BJ (cell line): ENCODE measurements at regions of chr14 and their contacts with region 1.

Region 1: DNA sequence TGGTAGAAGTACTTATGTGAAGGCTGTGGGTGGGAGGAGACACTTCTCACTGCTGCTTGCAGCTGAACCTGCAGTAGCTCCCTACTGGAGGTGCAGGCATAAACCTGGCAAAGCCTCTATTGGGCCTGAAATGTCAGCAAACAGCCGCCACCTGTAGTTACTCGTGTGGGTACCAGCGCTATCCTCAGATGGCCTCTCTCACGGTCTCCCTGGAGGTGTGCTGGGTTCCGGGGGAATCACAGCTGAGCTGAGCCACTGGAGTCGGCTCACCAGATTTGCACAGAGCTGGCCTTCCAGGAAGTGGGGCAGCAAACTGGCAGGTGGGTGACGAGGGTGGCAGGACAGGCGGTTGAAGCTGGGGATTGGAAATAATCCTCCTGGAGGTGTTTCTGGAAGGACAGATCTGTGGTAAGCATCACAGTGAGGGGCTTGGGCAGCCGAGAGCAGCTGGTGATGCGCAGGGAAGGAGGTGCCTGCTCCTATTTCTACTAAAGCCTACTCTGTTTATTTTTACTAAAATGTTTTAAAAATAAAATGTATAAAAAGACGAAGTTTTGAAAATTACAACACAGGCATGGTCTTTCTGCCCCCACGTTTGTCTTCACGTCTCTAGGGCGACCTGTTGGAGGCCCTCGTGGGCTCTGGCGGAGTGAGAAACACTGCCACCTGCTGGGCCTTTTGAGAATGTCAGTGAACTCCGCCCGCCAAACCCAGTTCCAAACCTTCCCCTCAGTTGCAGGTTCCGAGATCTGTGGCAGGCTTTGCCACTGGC is 67.8 kb upstream of the PLEKHG3 start:
- DNase-seq: no peak
- H3K4me3 ChIP-seq: no peak overlapping the region
- H3K27me3 ChIP-seq: no peaks in the 10 kb centered on the region
- CTCF ChIP-seq: peak; percentile 81

Region 2: DNA sequence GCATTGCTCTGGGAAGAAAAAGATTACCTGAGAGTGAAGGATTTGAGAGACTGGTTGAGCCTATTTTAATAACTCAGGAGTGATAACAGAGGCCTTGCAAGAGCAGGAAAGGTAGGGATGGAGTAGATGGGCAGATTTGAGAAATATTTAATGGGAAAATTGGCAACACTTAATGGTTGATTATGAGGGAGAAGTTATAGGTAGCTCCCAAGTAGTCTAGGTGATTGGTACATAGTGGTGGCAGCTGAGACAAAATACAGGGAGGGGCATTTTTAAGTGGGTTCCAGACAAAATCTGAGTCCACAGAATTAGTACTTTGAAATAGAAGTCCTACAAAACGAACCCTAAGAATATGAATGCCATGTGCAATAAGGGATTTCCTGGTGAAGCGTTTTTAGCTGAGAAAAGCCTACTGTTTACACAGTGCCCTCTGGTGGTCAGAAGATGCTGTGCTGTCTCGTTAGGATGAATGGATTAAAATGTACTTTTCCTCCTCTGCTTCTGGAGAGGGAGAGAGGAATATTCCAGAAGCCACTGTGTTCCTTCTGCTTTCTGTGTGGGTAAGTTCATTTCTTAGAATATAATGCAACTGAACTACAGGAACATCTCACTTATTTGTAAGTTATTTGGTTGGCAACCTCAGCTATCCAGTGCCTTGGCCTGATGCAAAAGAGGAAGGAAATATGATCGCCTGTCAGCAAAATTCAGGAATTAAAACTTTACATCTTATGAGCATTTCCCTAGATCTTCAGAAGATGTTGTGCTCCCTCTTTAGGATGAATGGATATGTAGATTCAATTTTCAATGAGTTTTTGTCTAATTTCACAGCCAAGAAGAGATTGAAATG is 125.3 kb before region 1 on chr14:
- CTCF ChIA-PET with region 1: interaction called, 23 read pairs
- POLR2A ChIA-PET with region 1: no interaction called
- DNase-seq: no peak
- H3K4me3 ChIP-seq: no peak overlapping the region
- H3K27me3 ChIP-seq: no peaks in the 10 kb centered on the region
- CTCF ChIP-seq: peak; percentile 90

Region 3: DNA sequence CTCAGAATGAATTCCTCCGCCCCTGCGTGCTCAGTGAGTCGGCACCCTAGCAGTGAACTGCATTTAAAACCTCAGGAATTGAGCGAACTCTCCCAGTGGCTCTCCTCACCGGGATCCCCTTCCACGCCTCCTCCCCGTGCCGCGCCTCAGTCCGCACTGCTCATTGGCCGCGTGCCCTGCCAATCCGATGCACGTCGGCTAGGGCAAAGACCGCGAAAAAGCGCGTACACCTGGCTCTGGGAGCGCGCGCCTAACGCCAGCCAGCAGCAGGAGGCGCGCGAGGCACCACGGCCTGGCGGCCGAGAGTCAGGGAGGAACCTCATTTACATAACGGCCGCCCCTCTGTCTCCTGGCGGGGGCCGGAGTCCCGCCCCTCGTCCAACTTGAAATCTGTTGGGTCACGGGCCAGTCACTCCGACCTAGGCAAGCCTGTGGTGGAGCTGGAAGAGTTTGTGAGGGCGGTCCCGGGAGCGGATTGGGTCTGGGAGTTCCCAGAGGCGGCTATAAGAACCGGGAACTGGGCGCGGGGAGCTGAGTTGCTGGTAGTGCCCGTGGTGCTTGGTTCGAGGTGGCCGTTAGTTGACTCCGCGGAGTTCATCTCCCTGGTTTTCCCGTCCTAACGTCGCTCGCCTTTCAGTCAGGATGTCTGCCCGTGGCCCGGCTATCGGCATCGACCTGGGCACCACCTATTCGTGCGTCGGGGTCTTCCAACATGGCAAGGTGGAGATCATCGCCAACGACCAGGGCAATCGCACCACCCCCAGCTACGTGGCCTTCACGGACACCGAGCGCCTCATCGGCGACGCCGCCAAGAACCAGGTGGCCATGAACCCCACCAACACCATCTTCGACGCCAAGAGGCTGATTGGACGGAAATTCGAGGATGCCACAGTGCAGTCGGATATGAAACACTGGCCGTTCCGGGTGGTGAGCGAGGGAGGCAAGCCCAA is 95.9 kb before region 1 on chr14 and contains the start of gene HSPA2:
- CTCF ChIA-PET with region 1: interaction called, 91 read pairs
- POLR2A ChIA-PET with region 1: interaction called, 4 read pairs
- DNase-seq: peak; percentile 96
- H3K4me3 ChIP-seq: peak within 1 kb of the TSS; percentile 55
- H3K27me3 ChIP-seq: no peaks in the 10 kb centered on the region
- CTCF ChIP-seq: peak; percentile 92
- polyA plus RNA-seq, gene HSPA2: 64.1 and 96.1 TPM in 2 replicates

Region 4: DNA sequence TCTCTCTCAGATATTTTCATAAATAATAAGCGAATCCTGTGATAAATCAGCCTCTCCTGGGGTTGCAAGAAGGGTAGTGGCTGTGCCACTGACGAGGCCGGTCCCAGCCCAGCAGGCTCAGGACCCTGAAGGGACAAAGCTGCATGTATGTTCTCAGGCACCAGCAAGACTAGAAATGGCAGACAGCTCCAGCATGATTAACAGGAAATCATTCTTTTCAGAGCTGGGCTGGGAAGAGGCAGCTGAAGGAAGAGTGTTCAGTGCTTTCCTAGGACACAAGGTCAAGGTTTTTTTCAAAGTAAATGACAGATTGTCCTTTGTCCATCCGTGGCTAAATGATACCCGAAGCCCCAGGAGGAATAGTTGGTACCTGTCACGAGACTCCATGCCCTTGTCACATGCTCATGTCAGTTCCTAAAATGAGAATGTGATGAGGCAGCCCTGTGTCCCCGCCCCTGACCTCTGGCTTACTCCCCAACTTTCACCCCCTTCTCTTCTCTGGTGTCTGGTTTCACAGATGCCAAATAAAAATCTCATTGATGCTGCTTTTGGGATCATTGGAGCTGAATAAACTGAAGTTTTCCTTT is 21.5 kb before region 1 on chr14:
- CTCF ChIA-PET with region 1: interaction called, 10 read pairs
- POLR2A ChIA-PET with region 1: no interaction called
- DNase-seq: no peak
- H3K4me3 ChIP-seq: no peak overlapping the region
- H3K27me3 ChIP-seq: no peaks in the 10 kb centered on the region
- CTCF ChIP-seq: no peak

Region 5: DNA sequence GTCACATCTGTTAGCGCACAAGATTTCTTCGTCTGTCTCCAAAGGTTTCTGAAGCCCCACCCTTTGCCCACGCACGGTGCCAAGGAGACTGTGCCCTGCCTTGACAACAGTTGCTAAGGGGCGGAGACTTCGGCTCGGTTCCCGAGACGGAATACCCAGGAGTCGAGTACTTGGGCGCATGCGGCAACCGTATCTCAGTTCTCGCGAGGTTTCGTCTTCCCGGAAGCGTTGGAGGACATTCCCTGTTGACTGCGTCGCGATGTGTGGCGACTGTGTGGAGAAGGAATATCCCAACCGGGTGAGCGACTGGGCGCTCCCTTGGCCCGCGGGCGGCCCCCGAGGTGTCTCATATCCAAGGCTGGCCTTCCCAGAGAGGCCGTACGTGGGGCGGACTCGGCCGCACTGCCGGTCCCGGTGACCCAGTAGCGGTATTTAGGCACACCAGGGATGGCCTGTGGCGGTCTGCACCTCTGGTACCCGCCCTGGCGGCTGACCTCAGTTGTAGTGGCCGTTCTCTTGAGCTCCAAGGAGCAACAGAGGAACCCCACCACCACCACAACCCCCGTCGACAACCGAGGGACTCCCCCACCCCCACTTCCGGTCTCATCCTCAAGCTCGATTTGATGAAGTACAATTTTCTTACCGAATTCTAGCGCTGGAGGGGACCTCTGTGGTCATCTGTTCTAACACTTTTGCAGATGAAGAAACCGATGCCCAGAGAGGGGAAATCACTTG is 278.0 kb after region 1 on chr14 and contains the start of gene CHURC1:
- CTCF ChIA-PET with region 1: no interaction called
- POLR2A ChIA-PET with region 1: no interaction called
- DNase-seq: peak; percentile 87
- H3K4me3 ChIP-seq: peak within 1 kb of the TSS; percentile 91
- H3K27me3 ChIP-seq: peaks cover 4% of the 10 kb centered on the region
- CTCF ChIP-seq: no peak
- polyA plus RNA-seq, gene CHURC1: 30.6 and 84.4 TPM in 2 replicates